Caco-2 (cell line): ENCODE measurements at regions of chr5 and their contacts with region 1.

Region 1: GRCh38 chr5:26700759-26701384 is 337.5 kb downstream of the CDH9 start:
- DNase-seq: peak; percentile 46 to 55
- H3K4me3 ChIP-seq: no peak overlapping the region
- H3K4me3 Mint-ChIP-seq: no peak overlapping the region
- H3K27ac Mint-ChIP-seq: no peak overlapping the region
- H3K4me1 ChIP-seq: no peaks in the 10 kb centered on the region
- H3K4me1 Mint-ChIP-seq: no peaks in the 10 kb centered on the region
- H3K27me3 ChIP-seq: no peaks in the 10 kb centered on the region
- H3K27me3 Mint-ChIP-seq: peaks cover 3% of the 10 kb centered on the region
- CTCF ChIP-seq: peak; percentile 62 to 64

Region 2: DNA sequence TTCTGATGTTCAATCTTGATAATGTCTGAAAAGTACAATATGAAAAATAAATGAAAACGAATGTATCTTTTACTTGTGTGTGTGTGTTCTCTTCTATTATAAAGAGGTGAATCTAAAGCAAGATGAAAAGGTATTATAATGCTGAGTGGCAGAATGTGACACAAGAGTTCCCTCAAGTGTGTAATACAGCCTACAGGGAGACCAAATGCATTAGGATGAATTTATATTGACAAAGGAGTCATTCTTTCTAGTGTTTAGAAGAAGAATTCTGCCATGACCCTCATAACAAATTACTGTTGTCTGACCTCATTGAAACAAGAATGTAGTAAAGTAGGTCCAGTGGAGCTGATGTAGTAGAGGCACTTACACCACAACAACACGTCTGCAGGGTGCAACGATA is 937.1 kb before region 1 on chr5:
- CTCF ChIA-PET with region 1: no interaction called
- POLR2A ChIA-PET with region 1: no interaction called
- intact Hi-C with region 1: loop called (anchors 10 kb)
- DNase-seq: no peak
- H3K4me3 ChIP-seq: no peak overlapping the region
- H3K4me3 Mint-ChIP-seq: no peak overlapping the region
- H3K27ac Mint-ChIP-seq: no peak overlapping the region
- H3K4me1 ChIP-seq: no peaks in the 10 kb centered on the region
- H3K4me1 Mint-ChIP-seq: no peaks in the 10 kb centered on the region
- H3K27me3 ChIP-seq: no peaks in the 10 kb centered on the region
- H3K27me3 Mint-ChIP-seq: no peaks in the 10 kb centered on the region
- CTCF ChIP-seq: no peak

Region 3: GRCh38 chr5:26666371-26666770 is 34.5 kb before region 1 on chr5:
- CTCF ChIA-PET with region 1: no interaction called
- POLR2A ChIA-PET with region 1: no interaction called
- intact Hi-C with region 1: no loop called
- DNase-seq: no peak
- H3K4me3 ChIP-seq: no peak overlapping the region
- H3K4me3 Mint-ChIP-seq: no peak overlapping the region
- H3K27ac Mint-ChIP-seq: no peak overlapping the region
- H3K4me1 ChIP-seq: no peaks in the 10 kb centered on the region
- H3K4me1 Mint-ChIP-seq: no peaks in the 10 kb centered on the region
- H3K27me3 ChIP-seq: no peaks in the 10 kb centered on the region
- H3K27me3 Mint-ChIP-seq: no peaks in the 10 kb centered on the region
- CTCF ChIP-seq: no peak